ENCODE measurements at regions of chr6 and their contacts with region 1.

Region 1: GRCh38 chr6:26156076-26156849 is 69.0 kb downstream of the HFE start:
- DNase-seq: peak; percentile 92 to 93
- ATAC-seq: peak; percentile 48 to 72 (median 58)
- H3K4me3 ChIP-seq: peak overlapping the region; percentile 65
- H3K4me3 Mint-ChIP-seq: peak overlapping the region; percentile 99
- H3K27ac ChIP-seq: peak overlapping the region; percentile 87
- H3K27ac Mint-ChIP-seq: peak overlapping the region; percentile 92 to 97
- H3K4me1 ChIP-seq: peaks cover 29% of the 10 kb centered on the region
- H3K4me1 Mint-ChIP-seq: peaks cover 56% of the 10 kb centered on the region in 2 donors
- H3K27me3 ChIP-seq: no peaks in the 10 kb centered on the region
- H3K27me3 Mint-ChIP-seq: no peaks in the 10 kb centered on the region
- CTCF ChIP-seq: no peak

Region 2: GRCh38 chr6:26103770-26104456 is 52.4 kb before region 1 on chr6:
- intact Hi-C with region 1: loop called (anchors 1 kb)
- DNase-seq: peak; percentile 86 to 95
- ATAC-seq: peak; percentile 87 to 96 (median 88)
- H3K4me3 ChIP-seq: peak overlapping the region; percentile 41
- H3K4me3 Mint-ChIP-seq: peak overlapping the region; percentile 90
- H3K27ac ChIP-seq: peak overlapping the region; percentile 84
- H3K27ac Mint-ChIP-seq: peak overlapping the region; percentile 98 to 99
- H3K4me1 ChIP-seq: peaks cover 10% of the 10 kb centered on the region
- H3K4me1 Mint-ChIP-seq: peaks cover 18% of the 10 kb centered on the region in 2 donors
- H3K27me3 ChIP-seq: no peaks in the 10 kb centered on the region
- H3K27me3 Mint-ChIP-seq: no peaks in the 10 kb centered on the region
- CTCF ChIP-seq: peak; percentile 41

Region 3: DNA sequence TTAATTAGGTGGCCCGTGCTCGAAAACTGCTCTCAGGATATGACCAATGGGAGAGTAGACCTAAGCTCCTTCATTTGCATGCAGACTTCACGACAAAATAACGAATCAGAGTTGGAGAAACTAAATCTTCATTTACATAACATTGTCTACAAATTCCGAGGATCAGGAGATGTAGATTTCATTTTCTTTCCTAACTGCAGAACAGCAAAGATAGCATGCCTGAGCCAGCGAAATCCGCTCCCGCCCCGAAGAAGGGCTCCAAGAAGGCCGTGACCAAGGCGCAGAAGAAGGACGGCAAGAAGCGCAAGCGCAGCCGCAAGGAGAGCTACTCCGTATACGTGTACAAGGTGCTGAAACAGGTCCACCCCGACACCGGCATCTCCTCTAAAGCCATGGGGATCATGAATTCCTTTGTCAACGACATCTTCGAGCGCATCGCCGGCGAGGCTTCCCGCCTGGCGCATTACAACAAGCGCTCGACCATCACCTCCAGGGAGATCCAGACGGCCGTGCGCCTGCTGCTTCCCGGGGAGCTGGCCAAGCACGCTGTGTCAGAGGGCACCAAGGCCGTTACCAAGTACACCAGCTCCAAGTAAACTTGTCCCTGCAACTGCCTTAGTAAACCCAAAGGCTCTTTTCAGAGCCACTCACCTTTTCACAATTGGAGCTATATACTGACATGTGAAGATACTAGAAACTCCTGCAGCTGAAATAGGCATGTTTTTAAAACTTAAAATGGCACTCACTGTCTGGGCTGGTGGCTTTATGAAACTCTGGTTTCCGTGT is 27.5 kb after region 1 on chr6:
- intact Hi-C with region 1: loop called (anchors 2 kb)
- DNase-seq: peak; percentile 50 to 87
- ATAC-seq: peak; percentile 86 to 90 (median 88)
- H3K4me3 ChIP-seq: peak overlapping the region; percentile 60
- H3K4me3 Mint-ChIP-seq: peak overlapping the region; percentile 93
- H3K27ac ChIP-seq: peak overlapping the region; percentile 58
- H3K27ac Mint-ChIP-seq: peak overlapping the region; percentile 89 to 90
- H3K4me1 ChIP-seq: peaks cover 28% of the 10 kb centered on the region
- H3K4me1 Mint-ChIP-seq: peaks cover 27 to 50% of the 10 kb centered on the region in 2 donors
- H3K27me3 ChIP-seq: no peaks in the 10 kb centered on the region
- H3K27me3 Mint-ChIP-seq: no peaks in the 10 kb centered on the region
- CTCF ChIP-seq: no peak

Region 4: GRCh38 chr6:26234421-26235296 is 78.4 kb after region 1 on chr6:
- intact Hi-C with region 1: loop called (anchors 2 kb)
- DNase-seq: peak; percentile 64 to 86
- ATAC-seq: peak; percentile 73 to 84 (median 73)
- H3K4me3 ChIP-seq: peak overlapping the region; percentile 69
- H3K4me3 Mint-ChIP-seq: peak overlapping the region; percentile 91
- H3K27ac ChIP-seq: peak overlapping the region; percentile 92
- H3K27ac Mint-ChIP-seq: peak overlapping the region; percentile 91 to 98
- H3K4me1 ChIP-seq: peaks cover 23% of the 10 kb centered on the region
- H3K4me1 Mint-ChIP-seq: peaks cover 32 to 37% of the 10 kb centered on the region in 2 donors
- H3K27me3 ChIP-seq: no peaks in the 10 kb centered on the region
- H3K27me3 Mint-ChIP-seq: no peaks in the 10 kb centered on the region
- CTCF ChIP-seq: no peak

Region 5: GRCh38 chr6:27132532-27133280 is 976.4 kb after region 1 on chr6:
- intact Hi-C with region 1: loop called (anchors 2 kb)
- DNase-seq: peak; percentile 87 to 98
- ATAC-seq: peak; percentile 82 to 95 (median 87)
- H3K4me3 ChIP-seq: peak overlapping the region; percentile 65
- H3K4me3 Mint-ChIP-seq: no peak overlapping the region
- H3K27ac ChIP-seq: peak overlapping the region; percentile 85
- H3K27ac Mint-ChIP-seq: no peak overlapping the region
- H3K4me1 ChIP-seq: peaks cover 29% of the 10 kb centered on the region
- H3K4me1 Mint-ChIP-seq: peaks cover 5 to 6% of the 10 kb centered on the region in 2 donors
- H3K27me3 ChIP-seq: no peaks in the 10 kb centered on the region
- H3K27me3 Mint-ChIP-seq: no peaks in the 10 kb centered on the region
- CTCF ChIP-seq: no peak